ENCODE measurements at regions of chr5 and their contacts with region 1.

Region 1: DNA sequence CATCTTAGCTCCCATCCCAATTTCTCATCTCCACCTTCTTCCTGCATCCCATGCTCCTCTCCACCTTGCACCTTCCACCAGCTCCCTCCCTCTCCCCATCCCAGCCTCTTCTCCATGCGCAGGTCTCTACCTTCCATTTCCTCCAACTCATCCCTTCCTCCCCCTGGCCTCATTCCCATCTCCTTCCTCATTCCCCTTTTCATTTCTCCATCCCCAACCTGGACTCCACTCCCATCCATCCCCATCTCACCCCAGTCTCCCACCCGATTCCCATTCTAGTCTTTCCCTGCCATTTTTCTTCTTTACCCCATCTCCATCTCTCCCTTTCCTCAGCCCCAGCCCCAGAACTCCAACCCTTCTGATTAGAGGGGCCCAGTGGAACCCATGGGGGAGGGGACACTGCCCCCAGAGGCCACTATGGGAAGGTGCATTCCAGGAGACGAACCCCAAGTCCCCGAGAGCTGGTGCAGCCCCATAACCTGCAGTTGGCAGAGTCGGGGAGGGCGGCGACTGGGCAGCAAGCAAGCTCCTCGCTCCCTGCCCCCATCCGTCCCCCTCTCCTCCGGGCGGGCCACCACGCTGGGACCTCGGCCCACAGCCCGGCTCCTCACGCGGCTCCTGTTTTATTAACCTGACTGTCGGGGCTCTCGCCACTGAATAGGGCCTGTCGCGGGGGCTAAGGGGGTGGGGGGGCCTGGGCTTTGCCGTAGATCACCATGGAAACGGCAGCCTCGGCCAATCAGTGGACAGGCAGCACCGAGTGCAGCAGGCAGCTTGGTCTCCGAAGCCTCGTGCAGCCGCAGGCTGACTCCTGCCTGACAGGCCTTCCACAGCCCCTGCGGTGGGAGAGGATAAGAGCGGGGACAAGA is 66.7 kb downstream of the PCDH1 start:
- DNase-seq: no peak
- H3K4me3 ChIP-seq: no peak overlapping the region
- H3K27ac ChIP-seq: no peak overlapping the region
- H3K4me1 ChIP-seq: no peaks in the 10 kb centered on the region
- H3K27me3 ChIP-seq: no peaks in the 10 kb centered on the region
- CTCF ChIP-seq: peak in 3 of 4 experiments; percentile 26 to 54 (median 28)
- POLR2A ChIP-seq: no peak

Region 2: DNA sequence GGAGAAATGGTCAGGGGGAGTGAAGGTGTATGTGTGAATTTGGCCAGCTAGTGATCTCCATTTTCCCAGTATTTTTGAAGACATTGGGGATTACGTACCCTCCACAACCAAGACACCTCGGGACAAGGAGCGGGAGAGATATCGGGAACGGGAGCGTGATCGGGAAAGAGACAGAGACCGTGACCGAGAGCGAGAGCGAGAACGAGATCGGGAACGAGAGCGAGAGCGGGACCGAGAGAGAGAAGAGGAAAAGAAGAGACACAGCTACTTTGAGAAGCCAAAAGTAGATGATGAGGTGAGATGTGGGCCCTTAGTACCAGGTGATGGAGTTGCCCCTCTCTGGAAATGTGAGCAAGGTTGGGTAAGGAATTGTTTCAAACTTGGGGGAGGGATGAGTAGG is 1152.7 kb before region 1 on chr5:
- intact Hi-C with region 1: no loop called
- DNase-seq: no peak
- H3K4me3 ChIP-seq: no peak overlapping the region
- H3K27ac ChIP-seq: no peak overlapping the region
- H3K4me1 ChIP-seq: no peaks in the 10 kb centered on the region
- H3K27me3 ChIP-seq: no peaks in the 10 kb centered on the region
- CTCF ChIP-seq: no peak
- POLR2A ChIP-seq: no peak

Region 3: GRCh38 chr5:141701360-141702119 is 110.0 kb before region 1 on chr5:
- intact Hi-C with region 1: loop called (anchors 10 kb)
- DNase-seq: no peak
- H3K4me3 ChIP-seq: no peak overlapping the region
- H3K27ac ChIP-seq: no peak overlapping the region
- H3K4me1 ChIP-seq: no peaks in the 10 kb centered on the region
- H3K27me3 ChIP-seq: no peaks in the 10 kb centered on the region
- CTCF ChIP-seq: no peak
- POLR2A ChIP-seq: no peak